SK-N-SH (cell line): ENCODE measurements at regions of chr13 and their contacts with region 1.

Region 1: GRCh38 chr13:96065849-96066248 is 12.6 kb upstream of the UGGT2 start:
- DNase-seq: no peak
- H3K4me3 ChIP-seq: no peak overlapping the region
- H3K27ac ChIP-seq: no peak overlapping the region
- H3K4me1 ChIP-seq: no peaks in the 10 kb centered on the region
- H3K27me3 ChIP-seq: no peaks in the 10 kb centered on the region
- CTCF ChIP-seq: no peak
- EP300 ChIP-seq: no peak
- RAD21 ChIP-seq: peak; percentile 39

Region 2: DNA sequence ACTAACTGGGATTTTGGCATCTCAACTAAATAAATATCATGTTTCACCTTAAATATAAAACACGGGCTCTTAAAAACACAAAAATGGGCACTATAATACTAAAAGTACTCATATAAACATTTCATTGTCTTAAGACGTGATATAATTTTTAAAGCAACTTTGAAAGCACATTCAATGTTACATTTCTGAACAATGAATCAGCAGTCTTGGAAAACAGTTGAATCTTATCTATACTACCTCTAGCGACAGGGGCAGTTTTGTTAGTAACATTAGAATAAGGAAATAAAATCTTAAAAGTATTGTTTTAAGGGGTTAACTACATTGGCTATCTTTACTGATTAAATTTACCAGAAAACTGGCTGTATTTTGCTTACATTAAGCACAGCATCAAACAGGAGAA is 169.5 kb before region 1 on chr13:
- CTCF ChIA-PET with region 1: no interaction called
- POLR2A ChIA-PET with region 1: no interaction called
- DNase-seq: no peak
- H3K4me3 ChIP-seq: no peak overlapping the region
- H3K27ac ChIP-seq: no peak overlapping the region
- H3K4me1 ChIP-seq: peaks cover 3 to 6% of the 10 kb centered on the region in 2 experiments; a peak in 3 of 4 replicates
- H3K27me3 ChIP-seq: no peaks in the 10 kb centered on the region
- CTCF ChIP-seq: no peak
- EP300 ChIP-seq: no peak
- RAD21 ChIP-seq: no peak

Region 3: DNA sequence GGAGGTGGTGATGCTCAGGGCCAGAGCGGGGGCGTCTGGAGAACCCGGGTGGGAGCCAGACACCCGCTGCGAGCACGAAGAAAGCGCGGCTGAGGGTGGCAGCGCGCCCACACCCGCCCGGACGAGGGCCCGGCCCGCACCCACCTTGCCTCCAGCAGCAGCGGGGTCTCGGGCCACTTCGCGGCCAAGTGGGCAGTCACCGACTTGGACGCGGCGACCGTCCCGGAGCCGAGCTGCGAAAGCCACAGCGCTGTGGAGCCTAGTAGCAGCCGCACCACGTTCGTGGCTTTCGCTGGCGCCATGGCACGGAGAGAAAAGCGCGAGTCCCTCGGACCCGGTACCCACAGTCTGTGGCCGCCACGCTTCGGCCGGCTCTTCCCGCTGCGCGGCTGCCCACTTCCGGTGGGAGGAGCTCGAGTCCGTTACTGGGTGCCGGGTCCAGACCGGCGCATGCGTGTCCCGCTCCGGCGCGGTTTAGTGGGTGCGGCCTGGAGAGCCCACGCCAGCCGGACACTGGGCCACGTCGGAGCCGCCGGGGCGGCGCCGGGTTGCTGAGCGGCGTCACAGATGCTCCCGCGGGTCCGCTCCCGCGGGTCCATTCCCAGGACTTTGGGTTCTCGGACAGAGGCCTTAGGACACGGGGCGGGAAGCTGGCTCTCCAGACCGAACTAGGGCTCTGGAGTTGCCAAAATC is 12.7 kb before region 1 on chr13 and contains the start of gene UGGT2:
- CTCF ChIA-PET with region 1: interaction called, 13 read pairs
- POLR2A ChIA-PET with region 1: no interaction called
- DNase-seq: peak; percentile 99
- H3K4me3 ChIP-seq: peak within 1 kb of the TSS; percentile 74 to 98
- H3K27ac ChIP-seq: peak within 1 kb of the TSS; percentile 68 to 85
- H3K4me1 ChIP-seq: peaks cover 0 to 3% of the 10 kb centered on the region in 2 experiments; a peak in 2 of 4 replicates
- H3K27me3 ChIP-seq: no peaks in the 10 kb centered on the region
- CTCF ChIP-seq: no peak
- EP300 ChIP-seq: no peak
- RAD21 ChIP-seq: no peak
- polyA plus RNA-seq, gene UGGT2: 13.3 and 20.2 TPM in 2 replicates

Region 4: DNA sequence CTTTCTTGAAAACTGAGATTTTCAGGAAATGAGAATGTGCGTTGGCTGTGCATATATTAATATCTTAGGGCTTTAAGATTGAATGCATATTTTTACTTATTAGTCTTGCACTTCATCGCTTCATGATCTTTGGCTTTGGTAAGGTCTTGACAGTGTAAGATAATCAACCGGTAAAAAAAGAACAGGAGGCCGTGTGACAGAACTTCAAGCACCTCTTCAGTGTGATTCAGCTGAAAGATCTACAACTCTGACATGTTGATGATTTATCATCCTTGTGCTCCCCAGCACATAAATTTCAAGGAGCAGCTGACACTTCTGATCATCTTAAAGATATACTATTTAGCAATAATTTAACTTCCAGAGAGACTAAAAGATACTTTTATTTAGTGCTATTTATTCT is 219.1 kb after region 1 on chr13:
- CTCF ChIA-PET with region 1: no interaction called
- POLR2A ChIA-PET with region 1: no interaction called
- DNase-seq: no peak
- H3K4me3 ChIP-seq: no peak overlapping the region
- H3K27ac ChIP-seq: no peak overlapping the region
- H3K4me1 ChIP-seq: no peaks in the 10 kb centered on the region; a peak in 2 of 4 replicates
- H3K27me3 ChIP-seq: no peaks in the 10 kb centered on the region
- CTCF ChIP-seq: no peak
- EP300 ChIP-seq: no peak
- RAD21 ChIP-seq: no peak